AG04450 (cell line): ENCODE measurements at regions of chr15 and their contacts with region 1.

Region 1: GRCh38 chr15:85504749-85505676 is 124.6 kb downstream of the AKAP13 start:
- DNase-seq: peak; percentile 24
- H3K4me3 ChIP-seq: no peak overlapping the region
- H3K27ac ChIP-seq: no peak overlapping the region
- H3K27me3 ChIP-seq: no peaks in the 10 kb centered on the region
- CTCF ChIP-seq: peak; percentile 68

Region 2: GRCh38 chr15:85312486-85312885 is 192.5 kb before region 1 on chr15:
- CTCF ChIA-PET with region 1: interaction called, 14 read pairs
- POLR2A ChIA-PET with region 1: no interaction called
- DNase-seq: no peak
- H3K4me3 ChIP-seq: no peak overlapping the region
- H3K27ac ChIP-seq: peak overlapping the region; percentile 75
- H3K27me3 ChIP-seq: no peaks in the 10 kb centered on the region
- CTCF ChIP-seq: no peak

Region 3: GRCh38 chr15:85330901-85331588 is 174.0 kb before region 1 on chr15:
- CTCF ChIA-PET with region 1: interaction called, 11 read pairs
- POLR2A ChIA-PET with region 1: no interaction called
- DNase-seq: no peak
- H3K4me3 ChIP-seq: no peak overlapping the region
- H3K27ac ChIP-seq: peak overlapping the region; percentile 88
- H3K27me3 ChIP-seq: no peaks in the 10 kb centered on the region
- CTCF ChIP-seq: peak; percentile 80

Region 4: GRCh38 chr15:85485956-85486567 is 19.0 kb before region 1 on chr15:
- CTCF ChIA-PET with region 1: interaction called, 45 read pairs
- POLR2A ChIA-PET with region 1: no interaction called
- DNase-seq: peak; percentile 58
- H3K4me3 ChIP-seq: no peak overlapping the region
- H3K27ac ChIP-seq: no peak overlapping the region
- H3K27me3 ChIP-seq: no peaks in the 10 kb centered on the region
- CTCF ChIP-seq: peak; percentile 80

Region 5: DNA sequence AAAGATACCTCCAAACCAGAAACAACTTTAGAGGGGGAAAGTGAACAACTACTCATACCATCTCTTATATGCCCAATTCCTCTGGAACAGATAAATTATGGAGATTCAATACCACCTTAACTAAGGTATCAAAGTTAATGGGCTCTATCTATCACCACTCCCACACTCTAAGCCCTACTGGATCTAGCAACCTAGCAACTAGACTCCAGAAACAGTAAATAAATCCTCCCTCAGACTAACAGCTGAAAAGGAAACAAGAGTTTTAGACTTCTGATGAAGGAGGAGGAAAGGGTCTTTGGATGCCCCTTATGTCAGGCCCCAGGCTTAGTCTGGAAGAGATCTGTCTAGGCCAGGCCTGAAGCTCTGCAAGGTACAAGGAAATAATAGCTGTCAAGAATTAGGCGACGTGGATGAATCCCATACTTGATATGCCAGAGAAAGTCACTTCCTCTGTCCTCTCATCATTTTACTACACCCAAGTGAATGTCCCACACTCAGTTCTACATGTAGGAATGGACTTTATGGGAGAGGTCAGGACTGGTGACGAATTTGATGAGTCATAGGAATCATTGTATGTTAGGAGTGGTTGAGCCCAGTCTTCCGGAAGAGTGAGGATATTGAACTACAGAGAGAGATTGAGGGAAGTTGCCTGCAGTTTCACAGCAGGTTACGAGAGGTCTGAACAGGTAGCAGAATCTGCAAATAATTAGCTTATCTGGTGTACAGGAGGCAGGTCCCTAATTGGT is 10.8 kb before region 1 on chr15:
- CTCF ChIA-PET with region 1: interaction called, 45 read pairs
- POLR2A ChIA-PET with region 1: no interaction called
- DNase-seq: no peak
- H3K4me3 ChIP-seq: no peak overlapping the region
- H3K27ac ChIP-seq: peak overlapping the region; percentile 63
- H3K27me3 ChIP-seq: no peaks in the 10 kb centered on the region
- CTCF ChIP-seq: no peak

Region 6: GRCh38 chr15:85527895-85528294 is 22.9 kb after region 1 on chr15:
- CTCF ChIA-PET with region 1: interaction called, 12 read pairs
- POLR2A ChIA-PET with region 1: no interaction called
- DNase-seq: peak; percentile 65
- H3K4me3 ChIP-seq: no peak overlapping the region
- H3K27ac ChIP-seq: peak overlapping the region; percentile 88
- H3K27me3 ChIP-seq: no peaks in the 10 kb centered on the region
- CTCF ChIP-seq: no peak

Region 7: GRCh38 chr15:85794603-85795336 is 289.8 kb after region 1 on chr15 and contains the start of gene KLHL25:
- CTCF ChIA-PET with region 1: no interaction called
- POLR2A ChIA-PET with region 1: no interaction called
- DNase-seq: peak; percentile 80
- H3K4me3 ChIP-seq: peak within 1 kb of the TSS; percentile 80
- H3K27ac ChIP-seq: peak within 1 kb of the TSS; percentile 47
- H3K27me3 ChIP-seq: no peaks in the 10 kb centered on the region
- CTCF ChIP-seq: no peak
- polyA plus RNA-seq, gene KLHL25: 2.9 and 3.5 TPM in 2 replicates